Head of caudate nucleus (tissue), 42 donors: ENCODE measurements at regions of chr3 and their contacts with region 1.

Region 1: DNA sequence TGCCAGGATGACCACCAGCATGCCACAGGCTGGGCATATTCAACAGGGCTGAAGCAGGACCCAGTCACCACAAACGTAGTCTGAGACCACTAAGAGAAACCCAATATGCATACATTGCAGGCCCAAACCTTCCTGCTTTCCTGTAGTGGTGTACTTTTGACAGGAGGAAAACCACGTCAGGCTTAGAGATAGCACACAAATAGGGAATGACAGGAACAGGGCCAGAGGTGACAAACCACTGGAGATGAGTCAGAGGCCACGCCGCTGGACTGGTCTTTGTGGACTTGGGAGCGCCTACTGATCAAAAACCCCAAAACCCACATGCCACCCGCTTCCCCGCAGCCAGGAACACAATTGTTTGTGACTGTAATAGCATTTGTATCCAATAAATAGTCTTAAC is 3.6 kb upstream of the EFCAB12 start:
- DNase-seq: no peak

Region 2: GRCh38 chr3:129399145-129399894 is 32.7 kb before region 1 on chr3:
- intact Hi-C with region 1: loop called (anchors 5 kb)
- DNase-seq: peak; percentile 64 to 95 (median 86)